MCF 10A (cell line): ENCODE measurements at regions of chr10 and their contacts with region 1.

Region 1: DNA sequence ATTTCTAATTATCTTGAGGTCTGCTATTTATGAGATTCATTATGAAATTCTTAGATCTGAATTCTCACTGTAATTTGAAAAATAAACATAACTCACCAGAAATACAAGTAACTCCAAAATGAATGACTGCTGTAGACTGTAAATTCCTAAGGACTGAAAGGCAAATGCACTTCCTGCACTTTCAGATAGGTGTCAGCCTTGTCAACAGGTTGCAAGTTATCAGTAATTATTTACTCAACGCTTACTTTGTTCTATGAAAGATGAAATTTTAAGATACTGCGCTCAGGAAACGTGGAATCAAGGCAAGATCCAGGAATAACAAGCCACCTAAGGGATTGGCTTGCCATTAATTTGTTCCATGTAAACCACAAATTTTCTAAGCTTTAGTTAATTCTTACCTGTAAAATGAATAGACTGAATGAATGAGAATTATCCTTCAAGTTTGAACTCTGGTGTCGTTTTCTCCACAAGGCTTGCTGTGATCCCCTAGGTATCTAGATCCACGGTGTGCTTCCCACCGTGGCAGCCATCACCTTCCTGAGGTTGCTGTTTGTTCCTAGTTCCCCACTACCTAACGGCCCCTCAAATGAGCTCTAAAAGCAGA is 12.6 kb downstream of the DHX32 start:
- DNase-seq: peak; percentile 57
- H3K4me3 Mint-ChIP-seq: no peak overlapping the region
- H3K27ac Mint-ChIP-seq: no peak overlapping the region
- H3K4me1 Mint-ChIP-seq: peaks cover 9% of the 10 kb centered on the region
- H3K27me3 Mint-ChIP-seq: no peaks in the 10 kb centered on the region
- CTCF ChIP-seq: peak; percentile 89

Region 2: DNA sequence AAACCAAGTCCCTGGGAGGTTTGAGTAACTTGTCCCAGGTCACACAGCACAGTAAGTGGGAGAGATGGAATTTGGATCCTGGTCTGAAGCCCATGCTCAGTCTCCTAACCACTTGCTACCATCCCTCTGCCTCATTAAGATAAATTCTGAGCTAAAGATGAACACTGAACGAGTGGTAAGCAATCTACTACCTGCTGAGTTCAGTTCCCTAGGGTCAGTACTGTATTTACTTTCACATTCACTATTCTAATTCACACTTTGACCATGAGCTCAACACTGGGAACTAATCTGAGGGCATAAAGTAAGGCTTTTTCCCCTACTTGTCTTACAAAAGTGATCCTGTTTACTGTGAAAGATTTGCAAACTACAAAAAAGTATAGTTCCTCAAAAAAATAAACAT is 47.8 kb before region 1 on chr10:
- CTCF ChIA-PET with region 1: no interaction called
- POLR2A ChIA-PET with region 1: no interaction called
- intact Hi-C with region 1: no loop called
- DNase-seq: no peak
- H3K4me3 Mint-ChIP-seq: no peak overlapping the region
- H3K27ac Mint-ChIP-seq: peak overlapping the region; percentile 69
- H3K4me1 Mint-ChIP-seq: peaks cover 10% of the 10 kb centered on the region
- H3K27me3 Mint-ChIP-seq: no peaks in the 10 kb centered on the region
- CTCF ChIP-seq: no peak

Region 3: GRCh38 chr10:125881192-125881591 is 12.7 kb after region 1 on chr10 and contains the start of gene DHX32:
- CTCF ChIA-PET with region 1: interaction called, 13 read pairs
- POLR2A ChIA-PET with region 1: interaction called, 4 read pairs
- intact Hi-C with region 1: no loop called
- DNase-seq: no peak
- H3K4me3 Mint-ChIP-seq: no peak within 1 kb of the TSS
- H3K27ac Mint-ChIP-seq: peak within 1 kb of the TSS; percentile 52
- H3K4me1 Mint-ChIP-seq: peaks cover 16% of the 10 kb centered on the region
- H3K27me3 Mint-ChIP-seq: no peaks in the 10 kb centered on the region
- CTCF ChIP-seq: no peak
- total RNA-seq, gene DHX32: 36.5 and 45.6 TPM in 2 replicates

Region 4: GRCh38 chr10:125976960-125977603 is 108.6 kb after region 1 on chr10:
- CTCF ChIA-PET with region 1: interaction called, 6 read pairs
- POLR2A ChIA-PET with region 1: no interaction called
- intact Hi-C with region 1: loop called (anchors 2 kb)
- DNase-seq: peak; percentile 24
- H3K4me3 Mint-ChIP-seq: no peak overlapping the region
- H3K27ac Mint-ChIP-seq: no peak overlapping the region
- H3K4me1 Mint-ChIP-seq: peaks cover 10% of the 10 kb centered on the region
- H3K27me3 Mint-ChIP-seq: no peaks in the 10 kb centered on the region
- CTCF ChIP-seq: no peak

Region 5: GRCh38 chr10:126504063-126504739 is 635.7 kb after region 1 on chr10:
- CTCF ChIA-PET with region 1: interaction called, 5 read pairs
- POLR2A ChIA-PET with region 1: no interaction called
- intact Hi-C with region 1: loop called (anchors 1 kb)
- DNase-seq: peak; percentile 82
- H3K4me3 Mint-ChIP-seq: no peak overlapping the region
- H3K27ac Mint-ChIP-seq: no peak overlapping the region
- H3K4me1 Mint-ChIP-seq: no peaks in the 10 kb centered on the region
- H3K27me3 Mint-ChIP-seq: no peaks in the 10 kb centered on the region
- CTCF ChIP-seq: peak; percentile 75